Prostate gland (tissue), 2 donors: ENCODE measurements at regions of chr12 and their contacts with region 1.

Region 1: GRCh38 chr12:57151741-57152630 is 4.6 kb upstream of the LRP1-AS start:
- DNase-seq: peak; percentile 29
- H3K4me3 ChIP-seq: no peak overlapping the region
- H3K27ac ChIP-seq: peak overlapping the region; percentile 64 to 76
- H3K4me1 ChIP-seq: peaks cover 4% of the 10 kb centered on the region
- H3K27me3 ChIP-seq: no peaks in the 10 kb centered on the region
- CTCF ChIP-seq: no peak
- POLR2A ChIP-seq: no peak

Region 2: GRCh38 chr12:56775638-56776037 is 376.3 kb before region 1 on chr12:
- intact Hi-C with region 1: no loop called
- DNase-seq: no peak
- H3K4me3 ChIP-seq: no peak overlapping the region
- H3K27ac ChIP-seq: no peak overlapping the region
- H3K4me1 ChIP-seq: no peaks in the 10 kb centered on the region
- H3K27me3 ChIP-seq: no peaks in the 10 kb centered on the region
- CTCF ChIP-seq: no peak
- POLR2A ChIP-seq: no peak

Region 3: GRCh38 chr12:57129889-57130288 is 22.1 kb before region 1 on chr12:
- intact Hi-C with region 1: loop called (anchors 1 kb)
- DNase-seq: no peak
- H3K4me3 ChIP-seq: peak overlapping the region; percentile 60 to 83
- H3K27ac ChIP-seq: peak overlapping the region; percentile 94 to 99
- H3K4me1 ChIP-seq: no peaks in the 10 kb centered on the region
- H3K27me3 ChIP-seq: no peaks in the 10 kb centered on the region
- CTCF ChIP-seq: no peak
- POLR2A ChIP-seq: no peak

Region 4: DNA sequence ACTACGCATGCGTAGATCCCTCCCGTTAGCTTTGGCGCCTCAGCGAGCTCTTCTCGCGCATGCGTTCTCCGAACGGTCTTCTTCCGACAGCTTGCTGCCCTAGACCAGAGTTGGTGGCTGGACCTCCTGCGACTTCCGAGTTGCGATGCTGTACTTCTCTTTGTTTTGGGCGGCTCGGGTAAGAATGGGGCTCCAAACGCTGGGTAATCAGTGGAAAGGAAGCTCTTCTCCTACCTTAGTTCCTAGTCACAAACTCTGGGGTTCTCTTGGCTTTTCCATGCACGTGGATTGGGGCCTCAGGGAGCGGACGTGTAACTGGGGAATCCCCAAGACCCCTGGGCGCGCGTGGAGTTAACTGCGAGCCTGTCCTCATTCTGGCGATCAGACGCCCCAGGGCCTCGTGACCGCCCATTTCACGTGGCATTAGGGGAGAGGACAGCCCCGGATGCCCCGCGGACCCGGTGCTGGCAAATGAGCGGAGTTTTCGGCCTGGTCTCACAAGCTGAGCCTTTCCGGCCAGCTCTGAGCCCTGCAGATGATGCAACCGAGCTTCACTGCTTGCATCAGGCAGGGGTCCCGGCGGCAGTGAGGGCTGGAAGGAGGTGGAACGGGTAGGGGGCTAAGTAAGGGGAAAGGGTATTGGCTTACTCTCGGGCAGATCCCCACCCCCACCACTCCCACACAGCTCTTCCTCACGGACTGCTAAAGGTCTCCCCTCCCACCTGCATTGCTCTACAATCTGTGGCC is 77.8 kb after region 1 on chr12 and contains the start of gene SHMT2:
- intact Hi-C with region 1: no loop called
- DNase-seq: peak; percentile 91
- H3K4me3 ChIP-seq: peak within 1 kb of the TSS; percentile 43 to 56
- H3K27ac ChIP-seq: peak within 1 kb of the TSS in 1 of 2 donors; percentile 53
- H3K4me1 ChIP-seq: peaks cover 9% of the 10 kb centered on the region
- H3K27me3 ChIP-seq: peaks cover 7% of the 10 kb centered on the region
- CTCF ChIP-seq: no peak
- POLR2A ChIP-seq: peak; percentile 43
- total RNA-seq, gene SHMT2: 49.6 to 51.4 TPM

Region 5: DNA sequence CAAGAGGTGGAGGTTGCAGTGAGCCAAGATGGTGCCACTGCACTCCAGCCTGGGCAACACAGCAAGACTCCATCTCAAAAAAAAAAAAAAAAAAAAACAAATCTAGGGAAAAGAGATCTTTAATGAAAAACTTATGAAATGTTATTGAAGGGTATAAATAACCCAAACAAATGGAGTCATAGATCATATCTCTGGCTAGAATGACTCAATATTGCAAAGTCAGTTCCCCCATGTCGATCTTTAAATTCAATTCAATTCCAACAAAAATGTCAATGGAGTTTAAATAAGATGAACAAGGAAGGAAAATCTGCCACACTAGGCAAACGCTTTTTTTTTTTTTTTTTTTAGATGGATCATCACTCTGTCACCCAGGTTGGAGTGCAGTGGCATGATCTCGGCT is 200.2 kb after region 1 on chr12:
- intact Hi-C with region 1: no loop called
- DNase-seq: no peak
- H3K4me3 ChIP-seq: no peak overlapping the region
- H3K27ac ChIP-seq: no peak overlapping the region
- H3K4me1 ChIP-seq: no peaks in the 10 kb centered on the region
- H3K27me3 ChIP-seq: no peaks in the 10 kb centered on the region
- CTCF ChIP-seq: no peak
- POLR2A ChIP-seq: no peak